ENCODE measurements at regions of chr2 and their contacts with region 1.

Region 1: GRCh38 chr2:106582148-106583143 is 95.3 kb downstream of the CD8B2 start:
- DNase-seq: peak; percentile 25 to 71 (median 56)
- ATAC-seq: peak; percentile 83
- H3K4me3 ChIP-seq: peak overlapping the region; percentile 56
- H3K4me3 Mint-ChIP-seq: peak overlapping the region; percentile 75 to 95 (median 92)
- H3K27ac ChIP-seq: no peak overlapping the region
- H3K27ac Mint-ChIP-seq: peak overlapping the region in 5 of 9 donors; percentile 43 to 82 (median 67)
- H3K4me1 ChIP-seq: peaks cover 0 to 14% of the 10 kb centered on the region in 2 donors
- H3K4me1 Mint-ChIP-seq: peaks cover 4 to 17% (median 13%) of the 10 kb centered on the region in 7 donors
- H3K27me3 ChIP-seq: no peaks in the 10 kb centered on the region
- H3K27me3 Mint-ChIP-seq: peaks cover 33 to 60% (median 45%) of the 10 kb centered on the region in 5 donors

Region 2: GRCh38 chr2:105114551-105114950 is 1467.9 kb before region 1 on chr2:
- CTCF ChIA-PET with region 1: no interaction called
- POLR2A ChIA-PET with region 1: no interaction called
- intact Hi-C with region 1: loop called in 1 of 2 experiments (anchors 1 kb)
- DNase-seq: peak in 6 of 9 donors; percentile 7 to 29 (median 14)
- ATAC-seq: peak; percentile 51
- H3K4me3 ChIP-seq: no peak overlapping the region
- H3K4me3 Mint-ChIP-seq: no peak overlapping the region
- H3K27ac ChIP-seq: no peak overlapping the region
- H3K27ac Mint-ChIP-seq: no peak overlapping the region
- H3K4me1 ChIP-seq: no peaks in the 10 kb centered on the region
- H3K4me1 Mint-ChIP-seq: peaks cover 0 to 1% (median 0%) of the 10 kb centered on the region in 7 donors
- H3K27me3 ChIP-seq: no peaks in the 10 kb centered on the region
- H3K27me3 Mint-ChIP-seq: no peaks in the 10 kb centered on the region

Region 3: DNA sequence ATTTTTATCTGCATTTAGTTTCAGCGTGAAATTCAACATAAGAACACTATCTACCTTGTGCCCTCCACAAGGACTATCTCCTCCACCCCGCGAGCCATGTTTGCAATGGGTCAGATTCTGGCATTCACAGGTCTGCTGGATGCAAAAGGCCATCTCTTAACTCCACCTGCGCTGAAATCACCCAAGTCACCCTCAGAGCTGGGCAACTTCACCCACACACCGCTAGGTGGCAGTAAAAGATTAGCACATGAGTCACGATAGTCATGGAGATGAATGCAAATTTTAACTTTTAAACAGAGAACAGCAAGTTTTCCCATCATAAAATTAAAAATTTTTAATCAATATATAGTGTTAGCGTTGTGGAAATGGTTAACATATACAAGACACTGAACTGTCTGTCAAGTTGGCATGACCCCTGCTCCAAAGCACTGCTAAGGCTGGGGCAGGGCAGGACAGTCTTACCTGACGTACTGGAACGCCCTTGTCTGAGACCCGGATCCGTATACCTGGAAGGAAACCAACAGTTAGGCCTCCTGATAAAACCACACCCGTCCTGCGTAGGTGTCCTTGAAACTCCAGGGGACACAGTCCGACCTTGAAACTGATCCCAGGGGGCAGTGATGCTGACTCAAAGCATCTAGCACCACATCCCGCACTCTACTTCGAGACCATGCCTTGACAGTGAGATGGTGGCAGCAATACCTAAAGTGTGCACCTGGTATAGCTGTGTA is 477.9 kb before region 1 on chr2:
- CTCF ChIA-PET with region 1: interaction called, 3 read pairs
- POLR2A ChIA-PET with region 1: no interaction called
- intact Hi-C with region 1: loop called (anchors 1 to 2 kb)
- DNase-seq: peak in 8 of 9 donors; percentile 55 to 78 (median 70)
- ATAC-seq: peak; percentile 84
- H3K4me3 ChIP-seq: no peak overlapping the region
- H3K4me3 Mint-ChIP-seq: no peak overlapping the region
- H3K27ac ChIP-seq: no peak overlapping the region
- H3K27ac Mint-ChIP-seq: peak overlapping the region in 7 of 9 donors; percentile 3 to 73 (median 21)
- H3K4me1 ChIP-seq: no peaks in the 10 kb centered on the region
- H3K4me1 Mint-ChIP-seq: peaks cover 0 to 20% (median 13%) of the 10 kb centered on the region in 7 donors
- H3K27me3 ChIP-seq: no peaks in the 10 kb centered on the region
- H3K27me3 Mint-ChIP-seq: no peaks in the 10 kb centered on the region

Region 4: GRCh38 chr2:106542811-106543259 is 39.6 kb before region 1 on chr2:
- CTCF ChIA-PET with region 1: no interaction called
- POLR2A ChIA-PET with region 1: no interaction called
- intact Hi-C with region 1: loop called (anchors 1 to 2 kb)
- DNase-seq: peak; percentile 43 to 77 (median 62)
- ATAC-seq: peak; percentile 95
- H3K4me3 ChIP-seq: no peak overlapping the region
- H3K4me3 Mint-ChIP-seq: peak overlapping the region; percentile 48 to 90 (median 80)
- H3K27ac ChIP-seq: no peak overlapping the region
- H3K27ac Mint-ChIP-seq: peak overlapping the region in 2 of 9 donors; percentile 67 to 80
- H3K4me1 ChIP-seq: no peaks in the 10 kb centered on the region
- H3K4me1 Mint-ChIP-seq: peaks cover 0 to 5% (median 4%) of the 10 kb centered on the region in 7 donors
- H3K27me3 ChIP-seq: no peaks in the 10 kb centered on the region
- H3K27me3 Mint-ChIP-seq: peaks cover 16 to 35% (median 19%) of the 10 kb centered on the region in 5 donors

Region 5: DNA sequence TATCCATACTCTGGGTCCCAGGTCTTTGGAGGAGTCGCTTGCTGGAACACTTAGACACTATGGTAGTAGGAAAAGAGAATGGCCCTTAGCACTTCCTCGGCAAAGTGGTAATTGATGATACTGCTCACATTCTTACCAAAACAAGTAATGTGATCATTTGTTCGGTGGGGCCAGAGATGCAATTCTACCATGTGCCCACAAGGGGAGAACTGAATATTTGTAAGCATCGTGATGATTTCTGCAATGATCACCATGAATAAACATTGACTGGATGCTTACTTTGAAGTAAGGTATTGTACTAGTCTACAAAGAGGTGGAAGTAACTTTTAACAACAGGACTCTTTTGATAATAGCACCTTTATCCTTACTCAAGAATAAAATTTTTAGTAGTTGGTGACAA is 14.4 kb after region 1 on chr2:
- CTCF ChIA-PET with region 1: interaction called, 11 read pairs
- POLR2A ChIA-PET with region 1: no interaction called
- intact Hi-C with region 1: no loop called
- DNase-seq: no peak
- ATAC-seq: no peak
- H3K4me3 ChIP-seq: no peak overlapping the region
- H3K4me3 Mint-ChIP-seq: no peak overlapping the region
- H3K27ac ChIP-seq: no peak overlapping the region
- H3K27ac Mint-ChIP-seq: no peak overlapping the region
- H3K4me1 ChIP-seq: no peaks in the 10 kb centered on the region
- H3K4me1 Mint-ChIP-seq: no peaks in the 10 kb centered on the region
- H3K27me3 ChIP-seq: no peaks in the 10 kb centered on the region
- H3K27me3 Mint-ChIP-seq: peaks cover 9 to 32% (median 27%) of the 10 kb centered on the region in 5 donors

Region 6: DNA sequence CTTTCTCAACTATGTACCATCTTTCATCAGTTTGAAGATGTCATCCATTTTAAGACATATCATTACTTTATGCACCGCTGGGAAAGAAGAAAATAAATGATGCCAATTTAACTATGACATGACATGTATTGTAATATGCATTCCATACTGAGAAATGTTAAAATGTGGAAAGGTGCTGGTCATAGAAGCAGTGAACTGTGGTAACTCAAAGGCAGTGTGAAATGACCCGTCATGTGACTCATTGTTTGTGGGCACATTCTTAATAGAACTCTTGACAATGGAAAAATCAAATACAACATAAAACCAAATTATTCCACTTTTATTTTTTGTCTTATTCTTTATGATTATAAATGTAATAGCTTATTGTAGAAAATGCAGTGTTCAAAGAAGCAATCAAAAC is 758.5 kb after region 1 on chr2:
- CTCF ChIA-PET with region 1: no interaction called
- POLR2A ChIA-PET with region 1: no interaction called
- intact Hi-C with region 1: no loop called
- DNase-seq: no peak
- ATAC-seq: no peak
- H3K4me3 ChIP-seq: no peak overlapping the region
- H3K4me3 Mint-ChIP-seq: no peak overlapping the region
- H3K27ac ChIP-seq: no peak overlapping the region
- H3K27ac Mint-ChIP-seq: no peak overlapping the region
- H3K4me1 ChIP-seq: no peaks in the 10 kb centered on the region
- H3K4me1 Mint-ChIP-seq: no peaks in the 10 kb centered on the region
- H3K27me3 ChIP-seq: no peaks in the 10 kb centered on the region
- H3K27me3 Mint-ChIP-seq: no peaks in the 10 kb centered on the region